ENCODE measurements at regions of chr22 and their contacts with region 1.

Region 1: GRCh38 chr22:19479357-19480172 is at the start of gene CDC45:
- DNase-seq: peak; percentile 88 to 98
- ATAC-seq: peak; percentile 90 to 96 (median 90)
- H3K4me3 ChIP-seq: peak within 1 kb of the TSS; percentile 59
- H3K4me3 Mint-ChIP-seq: peak within 1 kb of the TSS; percentile 98
- H3K27ac ChIP-seq: peak within 1 kb of the TSS; percentile 98
- H3K27ac Mint-ChIP-seq: peak within 1 kb of the TSS; percentile 99
- H3K4me1 ChIP-seq: peaks cover 15% of the 10 kb centered on the region
- H3K4me1 Mint-ChIP-seq: peaks cover 28 to 42% of the 10 kb centered on the region in 2 donors
- H3K27me3 ChIP-seq: no peaks in the 10 kb centered on the region
- H3K27me3 Mint-ChIP-seq: no peaks in the 10 kb centered on the region
- CTCF ChIP-seq: no peak
- total RNA-seq, gene CDC45: 1.6 to 4.8 (median 3.3) TPM

Region 2: DNA sequence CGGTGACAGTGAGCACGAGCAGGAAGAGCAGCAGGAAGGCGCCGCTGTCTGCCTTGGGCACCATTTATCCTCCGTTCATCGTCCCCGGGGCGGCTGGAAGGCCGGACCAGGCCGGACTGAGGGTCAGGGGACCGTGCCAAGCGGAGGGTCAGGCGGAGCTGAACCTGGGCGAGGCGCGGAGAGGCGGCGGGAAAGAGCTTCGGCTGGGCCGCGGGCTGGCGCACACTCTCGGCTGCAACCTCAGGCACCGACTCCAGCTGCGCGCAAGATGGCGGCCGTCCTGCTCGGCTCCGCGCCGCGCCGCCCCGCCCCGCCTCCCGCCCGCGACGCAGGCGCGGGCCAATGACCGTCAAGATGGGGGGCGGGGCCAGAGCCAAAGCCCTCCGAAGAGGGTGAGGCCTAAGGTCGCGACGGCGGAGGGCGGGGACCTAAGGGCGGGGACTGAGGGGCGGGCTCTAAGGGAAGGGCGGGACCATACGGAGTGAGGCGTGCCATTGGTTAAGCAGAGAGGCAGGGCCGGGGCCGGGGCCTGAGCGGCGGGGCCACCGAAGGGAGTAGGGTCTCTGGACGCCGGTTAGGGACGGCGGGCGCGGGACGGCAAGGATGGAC is 357.3 kb before region 1 on chr22 and contains the start of gene DGCR2:
- intact Hi-C with region 1: loop called (anchors 5 kb)
- DNase-seq: peak; percentile 92 to 98
- ATAC-seq: peak; percentile 95 to 99 (median 96)
- H3K4me3 ChIP-seq: peak within 1 kb of the TSS; percentile 93
- H3K4me3 Mint-ChIP-seq: peak within 1 kb of the TSS; percentile 88
- H3K27ac ChIP-seq: peak within 1 kb of the TSS; percentile 77
- H3K27ac Mint-ChIP-seq: peak within 1 kb of the TSS; percentile 63 to 90
- H3K4me1 ChIP-seq: peaks cover 49% of the 10 kb centered on the region
- H3K4me1 Mint-ChIP-seq: peaks cover 36 to 43% of the 10 kb centered on the region in 2 donors
- H3K27me3 ChIP-seq: no peaks in the 10 kb centered on the region
- H3K27me3 Mint-ChIP-seq: no peaks in the 10 kb centered on the region
- CTCF ChIP-seq: no peak
- total RNA-seq, gene DGCR2: 27.5 to 44.1 (median 41.3) TPM

Region 3: GRCh38 chr22:19178656-19179496 is 300.7 kb before region 1 on chr22 and contains the start of gene SLC25A1:
- intact Hi-C with region 1: loop called (anchors 2 kb)
- DNase-seq: peak; percentile 58 to 86
- ATAC-seq: peak; percentile 68 to 80 (median 79)
- H3K4me3 ChIP-seq: peak within 1 kb of the TSS; percentile 66
- H3K4me3 Mint-ChIP-seq: peak within 1 kb of the TSS; percentile 88
- H3K27ac ChIP-seq: peak within 1 kb of the TSS; percentile 45
- H3K27ac Mint-ChIP-seq: peak within 1 kb of the TSS; percentile 46 to 79
- H3K4me1 ChIP-seq: peaks cover 30% of the 10 kb centered on the region
- H3K4me1 Mint-ChIP-seq: peaks cover 6 to 11% of the 10 kb centered on the region in 2 donors
- H3K27me3 ChIP-seq: no peaks in the 10 kb centered on the region
- H3K27me3 Mint-ChIP-seq: no peaks in the 10 kb centered on the region
- CTCF ChIP-seq: no peak
- total RNA-seq, gene SLC25A1: 24.8 to 29.6 (median 26.9) TPM

Region 4: DNA sequence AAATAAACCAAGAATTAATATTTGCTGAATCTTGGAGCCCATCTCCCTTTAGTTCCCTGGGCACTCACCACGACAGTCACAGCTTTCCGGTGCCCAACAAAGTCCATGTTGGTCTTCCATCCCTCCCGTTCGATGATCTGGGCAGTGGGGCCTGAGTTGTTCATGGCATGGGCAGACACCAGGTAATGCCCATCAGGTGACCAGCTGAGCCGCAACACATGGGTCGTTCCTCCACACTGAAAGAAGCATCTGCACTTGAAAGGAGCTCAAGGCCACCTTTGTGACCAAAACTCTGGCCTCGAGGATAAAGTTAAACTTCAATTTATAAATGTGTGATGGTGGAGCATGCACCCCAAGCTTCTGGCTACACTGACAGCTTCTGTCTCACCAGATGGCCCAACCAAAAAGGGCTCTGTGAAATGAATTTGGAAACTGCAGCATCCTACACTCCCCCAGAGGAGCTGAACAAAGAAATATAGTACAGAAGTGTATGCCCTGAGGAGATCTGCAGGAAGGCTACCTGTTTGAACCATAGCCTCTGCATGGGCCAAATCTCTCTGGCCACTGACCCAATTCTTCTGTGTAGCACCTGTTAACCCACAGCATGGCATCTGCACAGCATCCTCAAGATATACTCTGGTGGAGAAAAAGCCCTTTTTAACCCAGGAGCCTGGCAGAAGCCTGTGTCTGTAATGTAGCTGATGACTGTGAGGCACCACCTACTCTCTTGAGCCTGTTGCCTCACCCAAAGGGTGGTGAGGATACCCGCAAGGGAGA is 85.1 kb before region 1 on chr22:
- intact Hi-C with region 1: loop called (anchors 5 kb)
- DNase-seq: no peak
- ATAC-seq: no peak
- H3K4me3 ChIP-seq: no peak overlapping the region
- H3K4me3 Mint-ChIP-seq: no peak overlapping the region
- H3K27ac ChIP-seq: no peak overlapping the region
- H3K27ac Mint-ChIP-seq: peak overlapping the region; percentile 59 to 61
- H3K4me1 ChIP-seq: no peaks in the 10 kb centered on the region
- H3K4me1 Mint-ChIP-seq: peaks cover 0 to 5% of the 10 kb centered on the region in 2 donors
- H3K27me3 ChIP-seq: no peaks in the 10 kb centered on the region
- H3K27me3 Mint-ChIP-seq: no peaks in the 10 kb centered on the region
- CTCF ChIP-seq: no peak

Region 5: GRCh38 chr22:19407649-19408606 is 71.6 kb before region 1 on chr22:
- intact Hi-C with region 1: no loop called
- DNase-seq: no peak
- ATAC-seq: no peak
- H3K4me3 ChIP-seq: no peak overlapping the region
- H3K4me3 Mint-ChIP-seq: no peak overlapping the region
- H3K27ac ChIP-seq: no peak overlapping the region
- H3K27ac Mint-ChIP-seq: peak overlapping the region; percentile 47 to 56
- H3K4me1 ChIP-seq: peaks cover 21% of the 10 kb centered on the region
- H3K4me1 Mint-ChIP-seq: peaks cover 41 to 51% of the 10 kb centered on the region in 2 donors
- H3K27me3 ChIP-seq: no peaks in the 10 kb centered on the region
- H3K27me3 Mint-ChIP-seq: no peaks in the 10 kb centered on the region
- CTCF ChIP-seq: no peak

Region 6: GRCh38 chr22:19432133-19432851 is 47.3 kb before region 1 on chr22 and contains the start of gene MRPL40:
- intact Hi-C with region 1: loop called (anchors 1 kb)
- DNase-seq: peak; percentile 82 to 91
- ATAC-seq: peak; percentile 80 to 94 (median 82)
- H3K4me3 ChIP-seq: peak within 1 kb of the TSS; percentile 95
- H3K4me3 Mint-ChIP-seq: peak within 1 kb of the TSS; percentile 97
- H3K27ac ChIP-seq: peak within 1 kb of the TSS; percentile 97
- H3K27ac Mint-ChIP-seq: peak within 1 kb of the TSS; percentile 93 to 100
- H3K4me1 ChIP-seq: peaks cover 40% of the 10 kb centered on the region
- H3K4me1 Mint-ChIP-seq: peaks cover 28 to 37% of the 10 kb centered on the region in 2 donors
- H3K27me3 ChIP-seq: no peaks in the 10 kb centered on the region
- H3K27me3 Mint-ChIP-seq: no peaks in the 10 kb centered on the region
- CTCF ChIP-seq: no peak
- total RNA-seq, gene MRPL40: 11.6 to 16.7 (median 14.2) TPM

Region 7: DNA sequence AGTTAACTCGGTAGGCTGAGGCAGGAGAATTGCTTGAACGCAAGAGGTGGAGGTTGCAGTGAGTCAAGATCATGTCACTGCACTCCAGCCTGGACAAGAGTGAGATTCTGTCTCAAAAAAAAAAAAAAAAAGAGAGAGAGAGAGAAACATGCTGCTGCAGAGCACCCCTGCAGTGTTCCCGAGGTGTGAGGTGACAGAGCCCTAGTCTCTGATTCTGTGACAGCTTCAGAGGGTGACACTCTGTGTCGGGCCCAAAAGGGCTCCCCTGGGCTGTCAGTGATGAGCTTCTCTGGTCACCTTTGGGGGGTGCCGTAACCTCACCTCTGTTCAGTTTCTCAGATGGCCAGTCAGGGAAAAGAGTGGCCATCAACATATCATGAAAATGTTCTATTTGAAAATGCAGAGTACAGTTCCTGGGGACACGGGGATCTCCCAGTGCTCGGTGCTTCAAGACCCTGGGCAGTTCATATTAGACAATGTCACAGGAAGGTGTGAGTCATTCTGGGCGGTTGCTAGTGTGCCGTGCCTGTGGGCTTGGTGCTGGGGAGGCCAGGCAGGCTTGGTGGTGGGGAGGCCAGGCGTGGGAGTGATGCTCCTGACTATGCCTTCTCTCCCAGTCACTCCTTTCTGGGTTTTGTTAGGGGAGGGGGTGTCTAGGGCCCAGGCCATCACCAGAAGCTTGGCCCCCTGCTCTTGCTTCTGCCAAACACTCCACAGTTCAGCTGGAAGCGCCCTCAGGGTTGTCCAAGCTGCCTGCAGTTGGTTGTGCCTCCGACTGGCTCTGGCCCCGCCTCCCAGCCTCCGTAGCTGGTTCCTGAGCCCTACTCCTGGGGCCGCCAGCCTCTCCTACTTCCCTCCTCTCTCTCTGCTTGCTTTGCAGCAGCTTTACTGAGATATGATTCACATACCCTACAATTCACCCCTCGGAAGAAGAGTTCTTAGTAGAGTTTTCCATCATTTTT is 97.2 kb after region 1 on chr22:
- intact Hi-C with region 1: loop called (anchors 5 kb)
- DNase-seq: peak; percentile 49 to 73
- ATAC-seq: peak; percentile 86 to 97 (median 92)
- H3K4me3 ChIP-seq: no peak overlapping the region
- H3K4me3 Mint-ChIP-seq: peak overlapping the region; percentile 18
- H3K27ac ChIP-seq: peak overlapping the region; percentile 70
- H3K27ac Mint-ChIP-seq: peak overlapping the region; percentile 85 to 96
- H3K4me1 ChIP-seq: peaks cover 38% of the 10 kb centered on the region
- H3K4me1 Mint-ChIP-seq: peaks cover 35 to 55% of the 10 kb centered on the region in 2 donors
- H3K27me3 ChIP-seq: no peaks in the 10 kb centered on the region
- H3K27me3 Mint-ChIP-seq: no peaks in the 10 kb centered on the region
- CTCF ChIP-seq: no peak

Region 8: DNA sequence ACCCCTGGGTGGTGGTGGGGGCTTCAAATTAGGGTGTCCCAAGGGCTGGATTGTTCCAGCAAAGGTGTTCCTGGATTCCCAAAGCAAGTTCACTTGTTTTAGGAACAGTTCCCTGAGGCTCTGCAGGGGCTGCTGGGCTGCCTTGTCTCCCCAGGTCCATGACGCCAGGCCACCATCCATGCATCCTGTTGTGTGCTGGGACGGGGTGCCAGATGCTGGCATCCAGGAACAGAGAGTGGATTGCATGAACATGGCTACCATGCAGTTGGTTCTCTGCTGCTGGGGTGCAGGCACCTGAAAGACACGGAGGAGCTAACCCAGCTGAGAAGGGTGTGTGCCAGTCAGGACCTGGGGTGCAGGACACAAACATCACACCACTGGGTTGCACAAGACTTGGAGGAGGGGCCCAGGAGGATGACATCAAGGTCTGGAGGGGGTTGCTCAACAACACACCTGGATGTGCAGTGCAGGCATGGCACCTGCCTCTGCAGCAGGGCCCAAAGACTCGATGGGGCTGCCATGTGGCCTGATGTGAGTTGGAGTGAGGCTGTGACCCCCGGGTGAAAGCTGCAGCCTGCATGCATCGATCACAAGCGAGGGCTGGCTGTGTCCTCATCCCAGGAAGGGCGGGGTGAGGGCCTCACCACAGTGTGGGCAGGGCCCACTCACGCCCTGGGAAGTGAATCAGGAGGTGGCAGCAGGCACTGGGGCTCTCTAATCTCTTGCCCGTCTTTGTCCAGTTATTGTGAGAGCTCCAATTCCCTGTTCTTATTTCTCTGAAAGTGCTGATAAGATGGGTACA is 118.7 kb after region 1 on chr22:
- intact Hi-C with region 1: no loop called
- DNase-seq: peak in 1 of 2 donors; percentile 44
- ATAC-seq: no peak
- H3K4me3 ChIP-seq: no peak overlapping the region
- H3K4me3 Mint-ChIP-seq: no peak overlapping the region
- H3K27ac ChIP-seq: no peak overlapping the region
- H3K27ac Mint-ChIP-seq: no peak overlapping the region
- H3K4me1 ChIP-seq: peaks cover 13% of the 10 kb centered on the region
- H3K4me1 Mint-ChIP-seq: peaks cover 0 to 3% of the 10 kb centered on the region in 2 donors
- H3K27me3 ChIP-seq: no peaks in the 10 kb centered on the region
- H3K27me3 Mint-ChIP-seq: peaks cover 0 to 3% of the 10 kb centered on the region in 2 donors
- CTCF ChIP-seq: no peak